ENCODE measurements at regions of chr20 and their contacts with region 1.

Region 1: GRCh38 chr20:45293041-45294002 is 13.3 kb upstream of the RBPJL start:
- DNase-seq: peak; percentile 69 to 94 (median 86)

Region 2: GRCh38 chr20:45008521-45009049 is 284.7 kb before region 1 on chr20:
- intact Hi-C with region 1: loop called (anchors 10 kb)
- DNase-seq: no peak